Transverse colon (tissue), 4 donors: ENCODE measurements at regions of chr9 and their contacts with region 1.

Region 1: DNA sequence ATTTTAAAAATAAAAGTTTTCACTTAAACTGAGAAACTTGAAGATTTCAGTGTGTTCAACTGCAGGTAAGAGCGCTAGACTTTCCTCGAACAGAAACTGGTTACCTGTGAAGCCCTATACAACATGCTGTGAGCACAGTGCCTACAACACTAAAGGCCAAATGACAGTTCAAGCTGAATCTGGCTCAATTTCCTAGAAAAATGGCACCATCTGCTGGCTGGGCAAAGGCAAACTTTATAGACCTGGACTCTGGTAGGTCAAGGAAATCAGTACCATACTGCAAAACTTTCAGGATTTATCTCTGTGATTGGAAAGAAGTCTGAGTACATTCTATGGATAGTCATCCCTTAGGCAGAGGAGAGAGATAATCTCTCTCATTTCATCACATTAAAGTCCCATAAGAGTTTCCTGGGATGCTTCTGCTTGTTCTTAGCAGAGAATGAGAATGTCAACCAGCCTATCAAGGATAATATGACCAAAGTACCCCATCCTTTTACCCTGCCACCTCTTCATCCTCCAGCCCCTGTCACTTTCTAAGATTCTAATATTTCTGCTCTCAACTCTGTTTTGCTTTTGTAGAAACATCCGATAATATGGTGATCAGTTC is 31.8 kb upstream of the FOXB2 start:
- DNase-seq: peak; percentile 51
- H3K4me3 ChIP-seq: no peak overlapping the region
- H3K27ac ChIP-seq: no peak overlapping the region
- H3K4me1 ChIP-seq: no peaks in the 10 kb centered on the region
- H3K27me3 ChIP-seq: peaks cover 36% of the 10 kb centered on the region
- CTCF ChIP-seq: peak; percentile 51 to 66 (median 53)
- EP300 ChIP-seq: no peak
- POLR2A ChIP-seq: no peak

Region 2: DNA sequence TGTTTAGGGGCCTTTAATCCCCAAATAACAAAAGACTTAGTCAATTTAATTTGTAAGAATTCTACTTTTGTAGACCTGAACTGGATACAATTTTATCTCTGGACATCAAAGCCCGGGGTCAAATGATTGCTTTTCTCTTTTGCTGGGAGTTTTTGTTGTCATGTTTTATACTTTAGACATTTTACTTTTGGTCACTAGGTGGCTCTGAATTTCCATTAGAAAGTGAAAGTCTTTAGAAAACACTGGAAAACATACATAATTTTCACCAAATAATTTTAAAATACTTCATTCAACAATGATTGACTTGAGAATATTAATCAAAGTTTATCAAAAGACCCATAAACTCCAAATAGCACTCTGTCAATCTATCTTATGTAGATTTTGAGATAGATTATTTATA is 226.2 kb before region 1 on chr9:
- in situ Hi-C with region 1: loop called in 1 of 4 experiments (anchors 25 kb)
- intact Hi-C with region 1: loop called (anchors 10 kb)
- DNase-seq: no peak
- H3K4me3 ChIP-seq: no peak overlapping the region
- H3K27ac ChIP-seq: no peak overlapping the region
- H3K4me1 ChIP-seq: peaks cover 0 to 15% (median 2%) of the 10 kb centered on the region in 4 donors
- H3K27me3 ChIP-seq: no peaks in the 10 kb centered on the region
- CTCF ChIP-seq: peak in 4 of 5 experiments; percentile 26 to 41 (median 29)
- EP300 ChIP-seq: no peak
- POLR2A ChIP-seq: no peak